ENCODE measurements at regions of chr12 and their contacts with region 1.

Region 1: DNA sequence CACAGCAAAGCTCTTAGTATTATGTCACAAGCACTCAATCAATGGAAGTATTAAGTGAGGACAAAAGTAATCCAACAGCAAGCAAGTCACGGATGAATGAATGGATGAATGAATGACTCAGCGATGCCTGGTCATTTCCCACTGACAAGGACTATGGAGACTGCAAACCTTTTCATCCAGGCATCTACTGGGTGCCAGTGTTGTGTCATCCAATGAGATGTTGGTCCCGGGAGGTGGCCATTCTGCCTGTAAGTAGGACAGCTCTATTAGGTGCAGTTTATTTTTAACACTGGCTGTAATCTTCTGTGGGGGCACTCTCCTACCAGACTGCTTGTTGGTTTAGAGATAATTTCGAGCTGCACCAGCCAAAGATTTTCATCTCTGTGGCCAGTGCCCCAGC is 39.4 kb downstream of the STAB2 start:
- DNase-seq: peak; percentile 43 to 79
- ATAC-seq: peak; percentile 78 to 96 (median 86)
- H3K4me3 ChIP-seq: no peak overlapping the region
- H3K27ac ChIP-seq: peak overlapping the region in 8 of 10 donors; percentile 20 to 78 (median 66)
- H3K4me1 ChIP-seq: peaks cover 0 to 24% (median 7%) of the 10 kb centered on the region in 9 donors
- H3K27me3 ChIP-seq: no peaks in the 10 kb centered on the region
- CTCF ChIP-seq: peak in 6 of 9 donors; percentile 12 to 70 (median 36)

Region 2: GRCh38 chr12:103571286-103571685 is 55.2 kb before region 1 on chr12:
- intact Hi-C with region 1: loop called in 2 of 10 experiments (anchors 2 to 10 kb)
- DNase-seq: peak; percentile 19 to 49
- ATAC-seq: peak; percentile 57 to 92 (median 86)
- H3K4me3 ChIP-seq: peak overlapping the region in 4 of 10 donors; percentile 11 to 38 (median 18)
- H3K27ac ChIP-seq: peak overlapping the region in 6 of 10 donors; percentile 3 to 62 (median 20)
- H3K4me1 ChIP-seq: peaks cover 0 to 17% (median 0%) of the 10 kb centered on the region in 9 donors
- H3K27me3 ChIP-seq: peaks cover 0 to 22% (median 0%) of the 10 kb centered on the region in 7 donors
- CTCF ChIP-seq: peak in 1 of 9 donors; percentile 20

Region 3: GRCh38 chr12:103742349-103742932 is 115.9 kb after region 1 on chr12:
- intact Hi-C with region 1: loop called in 1 of 10 experiments (anchors 10 kb)
- DNase-seq: peak in 1 of 2 donors; percentile 20
- ATAC-seq: peak; percentile 46 to 86 (median 65)
- H3K4me3 ChIP-seq: no peak overlapping the region
- H3K27ac ChIP-seq: peak overlapping the region in 1 of 10 donors; percentile 45
- H3K4me1 ChIP-seq: peaks cover 0 to 11% (median 6%) of the 10 kb centered on the region in 9 donors
- H3K27me3 ChIP-seq: no peaks in the 10 kb centered on the region
- CTCF ChIP-seq: no peak

Region 4: DNA sequence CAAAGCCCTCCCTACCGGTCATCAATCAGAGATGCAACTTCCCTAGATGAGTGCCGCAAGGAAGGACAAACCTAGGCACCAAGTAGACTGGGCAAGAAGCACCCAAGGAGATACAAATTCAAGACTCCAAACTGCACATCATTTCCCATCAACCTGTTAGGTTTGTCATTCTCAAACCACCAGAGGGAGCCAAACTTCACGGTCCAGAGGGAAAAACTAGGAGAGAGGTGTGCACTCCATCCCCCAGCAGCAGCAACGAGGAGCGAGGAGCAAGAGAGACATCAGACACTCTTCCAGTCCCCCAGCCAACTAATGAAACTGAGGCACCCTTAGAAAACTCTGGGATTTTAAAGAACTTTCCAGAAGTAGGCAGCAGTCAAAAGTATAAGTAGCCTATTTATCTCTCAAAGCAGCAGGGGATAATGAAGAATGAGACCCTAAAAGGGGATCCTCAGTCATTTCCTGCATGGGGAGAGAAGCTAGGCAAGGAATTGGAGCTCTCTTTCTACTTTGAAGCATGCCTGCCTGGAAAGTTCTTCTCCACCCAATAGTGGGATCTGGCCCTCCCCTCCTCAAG is 251.5 kb after region 1 on chr12:
- intact Hi-C with region 1: loop called in 3 of 10 experiments (anchors 5 to 10 kb)
- DNase-seq: peak in 1 of 2 donors; percentile 57
- ATAC-seq: peak in 7 of 8 donors; percentile 73 to 86 (median 75)
- H3K4me3 ChIP-seq: no peak overlapping the region
- H3K27ac ChIP-seq: no peak overlapping the region
- H3K4me1 ChIP-seq: no peaks in the 10 kb centered on the region
- H3K27me3 ChIP-seq: no peaks in the 10 kb centered on the region
- CTCF ChIP-seq: peak; percentile 51 to 76 (median 74)

Region 5: DNA sequence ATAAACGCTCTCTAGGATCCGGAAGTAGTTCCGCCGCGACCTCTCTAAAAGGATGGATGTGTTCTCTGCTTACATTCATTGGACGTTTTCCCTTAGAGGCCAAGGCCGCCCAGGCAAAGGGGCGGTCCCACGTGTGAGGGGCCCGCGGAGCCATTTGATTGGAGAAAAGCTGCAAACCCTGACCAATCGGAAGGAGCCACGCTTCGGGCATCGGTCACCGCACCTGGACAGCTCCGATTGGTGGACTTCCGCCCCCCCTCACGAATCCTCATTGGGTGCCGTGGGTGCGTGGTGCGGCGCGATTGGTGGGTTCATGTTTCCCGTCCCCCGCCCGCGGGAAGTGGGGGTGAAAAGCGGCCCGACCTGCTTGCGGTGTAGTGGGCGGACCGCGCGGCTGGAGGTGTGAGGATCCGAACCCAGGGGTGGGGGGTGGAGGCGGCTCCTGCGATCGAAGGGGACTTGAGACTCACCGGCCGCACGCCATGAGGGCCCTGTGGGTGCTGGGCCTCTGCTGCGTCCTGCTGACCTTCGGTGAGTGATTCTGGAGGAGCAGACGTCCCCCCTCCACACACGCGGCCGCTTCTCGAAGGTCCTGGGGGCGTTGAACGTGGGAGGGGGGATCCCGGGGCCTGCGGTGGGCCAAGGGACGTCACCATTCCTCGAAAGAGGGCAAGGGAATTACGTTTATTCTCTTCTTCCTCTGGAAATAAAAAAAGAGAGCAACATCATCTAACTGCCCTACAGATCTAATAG is 303.7 kb after region 1 on chr12 and contains the start of gene HSP90B1:
- intact Hi-C with region 1: loop called in 1 of 10 experiments (anchors 5 kb)
- DNase-seq: peak; percentile 98 to 100
- ATAC-seq: peak; percentile 91 to 95 (median 94)
- H3K4me3 ChIP-seq: peak within 1 kb of the TSS; percentile 61 to 95 (median 78)
- H3K27ac ChIP-seq: peak within 1 kb of the TSS; percentile 88 to 98 (median 94)
- H3K4me1 ChIP-seq: peaks cover 5 to 61% (median 50%) of the 10 kb centered on the region in 9 donors
- H3K27me3 ChIP-seq: no peaks in the 10 kb centered on the region
- CTCF ChIP-seq: no peak
- total RNA-seq, gene HSP90B1: 235 to 487 (median 297) TPM

Region 6: GRCh38 chr12:104197264-104197663 is 570.8 kb after region 1 on chr12:
- intact Hi-C with region 1: no loop called
- DNase-seq: no peak
- ATAC-seq: peak in 3 of 8 donors; percentile 52 to 77 (median 69)
- H3K4me3 ChIP-seq: no peak overlapping the region
- H3K27ac ChIP-seq: no peak overlapping the region
- H3K4me1 ChIP-seq: no peaks in the 10 kb centered on the region
- H3K27me3 ChIP-seq: no peaks in the 10 kb centered on the region
- CTCF ChIP-seq: no peak